ENCODE measurements at regions of chr6 and their contacts with region 1.

Region 1: DNA sequence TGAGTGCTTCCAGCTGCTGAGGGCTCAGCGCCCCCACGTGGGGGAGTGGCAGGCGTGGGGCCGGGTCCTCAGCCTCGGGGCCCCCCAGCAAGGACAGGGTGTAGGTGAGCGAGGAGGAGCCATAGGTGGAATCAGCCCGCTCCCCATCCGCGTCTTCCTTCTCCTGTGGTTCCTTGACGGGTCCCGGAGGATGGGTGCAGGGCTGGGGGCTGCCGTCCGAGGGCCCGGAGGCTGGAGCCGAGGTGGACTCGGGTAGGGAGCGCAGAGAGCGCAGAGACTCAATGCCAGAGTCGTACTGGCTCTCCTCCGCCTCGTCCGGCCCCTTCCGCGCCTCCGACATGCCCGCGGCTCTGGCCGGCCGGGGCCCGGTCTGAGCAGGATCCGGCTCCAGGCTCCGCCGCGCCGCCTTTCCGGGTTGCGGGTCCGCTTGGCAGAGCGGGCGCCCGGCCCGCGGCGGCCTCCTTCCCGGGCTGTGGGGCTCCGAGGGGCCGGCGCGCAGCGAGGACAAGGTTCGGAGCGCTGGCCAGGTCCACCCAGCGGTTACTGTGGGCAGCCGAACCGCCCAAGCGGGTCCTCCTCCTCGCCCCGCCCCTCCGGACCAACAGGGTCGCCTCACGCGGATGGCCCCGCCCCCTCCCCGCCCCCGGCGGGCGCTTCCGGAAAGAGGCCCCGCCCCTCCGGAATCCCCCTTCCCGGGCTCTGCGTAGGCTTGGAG is at the start of gene NFKBIE:
- DNase-seq: peak in 1 of 2 experiments; percentile 99
- H3K4me3 ChIP-seq: peak within 1 kb of the TSS; percentile 57 to 85 (median 76)
- H3K27ac ChIP-seq: no peak within 1 kb of the TSS
- H3K4me1 ChIP-seq: peaks cover 12 to 43% (median 21%) of the 10 kb centered on the region in 4 experiments
- H3K27me3 ChIP-seq: peaks cover 0 to 3% (median 0%) of the 10 kb centered on the region in 4 experiments; a peak in 2 of 7 replicates
- CTCF ChIP-seq: no peak; a peak in 1 of 4 replicates
- EP300 ChIP-seq: no peak
- POLR2A ChIP-seq: peak in 1 of 2 experiments; percentile 64; a peak in 2 of 3 replicates
- RAD21 ChIP-seq: peak in 1 of 2 experiments; percentile 34; a peak in 1 of 4 replicates
- total RNA-seq, gene NFKBIE: 10.8 and 13.5 TPM in 2 replicates

Region 2: DNA sequence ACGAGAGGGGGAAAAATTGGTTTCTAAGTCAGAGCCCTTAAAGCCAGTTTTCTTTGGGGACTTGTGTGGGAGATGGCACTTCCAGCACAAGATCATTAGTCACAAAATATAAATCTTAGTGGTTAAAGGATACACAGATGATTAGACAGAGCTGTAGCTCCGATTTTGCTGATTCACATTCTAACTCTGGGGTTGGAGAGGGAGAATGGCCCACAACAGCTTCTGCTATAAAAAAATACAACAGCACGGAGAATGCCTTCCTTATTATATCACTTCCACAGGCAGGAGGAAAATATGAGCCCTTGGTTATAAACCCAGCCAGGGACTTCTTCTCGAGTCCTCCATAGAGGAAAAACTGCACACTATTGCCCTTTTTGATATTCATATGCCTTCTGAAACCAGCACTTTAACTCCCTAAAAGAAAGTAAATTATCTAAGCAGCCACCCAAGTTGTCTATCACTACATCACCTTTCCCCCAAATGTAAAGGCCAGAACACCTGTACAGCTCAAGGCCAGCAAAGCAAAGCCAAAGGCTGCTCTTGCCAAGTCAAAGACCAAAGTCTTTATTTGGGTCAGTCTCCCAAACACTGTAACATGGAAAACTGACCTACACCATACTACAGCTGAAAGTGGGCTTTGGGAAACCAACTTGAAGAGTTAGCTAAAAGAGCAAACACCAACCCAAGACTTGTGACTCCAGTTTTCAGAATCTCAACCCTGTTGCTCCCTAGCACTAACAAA is 148.4 kb before region 1 on chr6:
- CTCF ChIA-PET with region 1: no interaction called
- POLR2A ChIA-PET with region 1: no interaction called
- DNase-seq: no peak
- H3K4me3 ChIP-seq: no peak overlapping the region
- H3K27ac ChIP-seq: peak overlapping the region; percentile 39; the same call in 1 of the 2 replicates
- H3K4me1 ChIP-seq: peaks cover 0 to 7% (median 2%) of the 10 kb centered on the region in 4 experiments; a peak in 3 of 7 replicates
- H3K27me3 ChIP-seq: no peaks in the 10 kb centered on the region
- CTCF ChIP-seq: no peak
- EP300 ChIP-seq: no peak
- POLR2A ChIP-seq: no peak
- RAD21 ChIP-seq: no peak

Region 3: DNA sequence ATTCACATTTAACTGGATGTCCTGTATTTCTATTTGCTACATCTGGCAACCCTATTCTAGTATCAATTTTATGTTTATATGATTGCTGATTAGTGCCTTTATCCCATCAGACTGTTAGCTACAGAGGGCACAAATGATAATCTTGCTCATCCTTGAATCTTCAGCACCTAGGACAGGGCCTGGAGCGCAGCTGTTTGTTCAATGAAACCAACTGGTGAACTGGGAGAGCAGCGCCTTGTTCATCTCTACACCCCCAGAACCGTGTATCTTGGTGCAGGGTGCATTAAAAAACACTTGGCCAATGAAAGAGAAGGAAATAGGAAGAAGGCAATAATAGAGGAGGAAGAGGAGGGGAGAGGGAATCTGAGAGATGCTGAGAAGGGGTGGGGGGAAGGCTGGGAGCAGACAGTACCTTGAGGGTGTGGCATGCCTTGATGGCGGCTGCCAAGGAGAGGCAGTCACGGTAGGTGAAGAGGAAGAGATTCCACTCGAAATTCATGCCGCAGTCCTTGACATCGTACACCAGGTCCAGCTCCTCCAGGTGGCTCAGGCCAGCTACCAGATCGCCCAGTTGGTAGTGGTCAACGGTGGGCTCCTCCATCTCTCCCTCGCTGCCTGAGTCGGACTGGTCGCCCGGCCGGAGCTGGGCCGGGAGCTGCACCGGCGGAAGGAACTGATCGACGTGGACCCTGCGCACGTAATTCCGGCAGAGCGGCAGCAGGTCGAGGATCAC is 20.6 kb after region 1 on chr6:
- CTCF ChIA-PET with region 1: interaction called, 34 read pairs
- POLR2A ChIA-PET with region 1: interaction called, 6 read pairs
- DNase-seq: peak in 1 of 2 experiments; percentile 65
- H3K4me3 ChIP-seq: no peak overlapping the region
- H3K27ac ChIP-seq: no peak overlapping the region
- H3K4me1 ChIP-seq: no peaks in the 10 kb centered on the region
- H3K27me3 ChIP-seq: peaks cover 0 to 4% (median 1%) of the 10 kb centered on the region in 4 experiments; a peak in 3 of 7 replicates
- CTCF ChIP-seq: no peak
- EP300 ChIP-seq: no peak
- POLR2A ChIP-seq: no peak
- RAD21 ChIP-seq: no peak

Region 4: DNA sequence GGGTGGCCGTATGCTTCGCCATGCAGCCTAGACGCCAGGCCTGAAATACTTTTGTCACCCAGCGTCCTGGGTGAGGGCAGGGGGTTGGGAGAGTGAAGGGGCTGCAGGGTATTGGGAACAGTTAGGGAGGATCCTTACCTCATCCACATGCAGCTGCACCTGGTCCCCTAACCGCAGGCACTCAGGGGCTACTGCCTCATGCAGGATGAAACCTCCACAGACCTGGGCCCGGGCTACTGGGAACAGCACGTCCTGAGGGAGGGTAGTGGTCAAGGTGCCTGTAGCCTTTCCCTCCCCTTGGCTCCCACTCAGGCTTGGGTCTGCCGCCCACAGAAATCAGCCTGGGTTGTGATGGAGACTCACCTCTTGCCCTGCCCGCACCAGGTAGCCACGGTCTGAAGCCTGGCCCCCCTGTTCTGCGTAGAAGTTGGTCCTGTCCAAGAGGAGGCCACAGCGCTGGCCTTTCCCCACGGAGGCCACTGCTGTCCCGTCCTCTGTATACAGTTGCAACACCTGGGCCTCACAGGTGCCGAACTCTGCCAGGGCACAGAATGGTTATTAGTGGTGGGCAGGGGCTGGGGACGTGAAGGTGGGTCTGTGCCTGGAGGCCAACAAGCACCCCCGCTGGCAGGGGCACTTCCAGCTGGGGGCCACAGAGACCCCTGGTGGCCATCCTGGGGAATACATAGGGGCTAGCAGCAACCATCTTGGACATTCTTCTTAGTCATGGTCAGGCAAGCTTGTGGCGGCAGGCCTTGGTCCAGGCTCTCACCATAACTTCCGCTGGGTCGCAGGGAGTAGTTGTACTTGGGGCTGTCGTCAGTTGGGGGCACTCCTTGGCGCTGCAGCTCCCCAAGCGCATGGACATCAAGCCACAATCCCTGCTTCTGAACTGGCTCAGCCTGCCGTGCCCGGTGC is 39.4 kb after region 1 on chr6:
- CTCF ChIA-PET with region 1: interaction called, 330 read pairs
- POLR2A ChIA-PET with region 1: interaction called, 102 read pairs
- DNase-seq: peak in 1 of 2 experiments; percentile 80
- H3K4me3 ChIP-seq: no peak overlapping the region
- H3K27ac ChIP-seq: no peak overlapping the region
- H3K4me1 ChIP-seq: peaks cover 0 to 4% (median 0%) of the 10 kb centered on the region in 4 experiments; a peak in 1 of 7 replicates
- H3K27me3 ChIP-seq: no peaks in the 10 kb centered on the region
- CTCF ChIP-seq: peak in 2 of 3 experiments; percentile 88 to 95; a peak in 3 of 4 replicates
- EP300 ChIP-seq: no peak
- POLR2A ChIP-seq: no peak
- RAD21 ChIP-seq: peak; percentile 72 to 77

Region 5: DNA sequence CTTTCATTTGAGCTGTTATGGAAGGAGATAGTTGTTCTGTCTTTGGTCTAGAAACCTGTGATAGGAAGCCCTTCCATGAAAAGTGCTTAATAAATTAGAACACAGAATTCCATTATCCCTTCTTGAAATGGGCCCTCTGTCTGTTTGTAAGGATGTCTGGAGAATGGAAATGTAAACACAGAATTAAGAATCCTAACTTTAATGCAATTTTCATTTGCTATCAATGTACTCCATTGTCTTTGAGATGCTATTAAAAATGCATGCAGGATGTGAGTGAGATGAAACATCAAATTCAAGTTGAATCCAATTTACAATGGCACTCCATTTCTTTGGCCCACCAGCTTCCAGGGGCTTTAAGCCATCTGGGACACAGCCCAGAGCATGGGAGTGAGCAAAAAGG is 61.9 kb after region 1 on chr6:
- CTCF ChIA-PET with region 1: interaction called, 15 read pairs
- POLR2A ChIA-PET with region 1: interaction called, 5 read pairs
- DNase-seq: no peak
- H3K4me3 ChIP-seq: no peak overlapping the region
- H3K27ac ChIP-seq: no peak overlapping the region
- H3K4me1 ChIP-seq: peaks cover 0 to 11% (median 6%) of the 10 kb centered on the region in 4 experiments; a peak in 4 of 7 replicates
- H3K27me3 ChIP-seq: no peaks in the 10 kb centered on the region; a peak in 1 of 7 replicates
- CTCF ChIP-seq: no peak
- EP300 ChIP-seq: no peak
- POLR2A ChIP-seq: no peak
- RAD21 ChIP-seq: no peak

Region 6: DNA sequence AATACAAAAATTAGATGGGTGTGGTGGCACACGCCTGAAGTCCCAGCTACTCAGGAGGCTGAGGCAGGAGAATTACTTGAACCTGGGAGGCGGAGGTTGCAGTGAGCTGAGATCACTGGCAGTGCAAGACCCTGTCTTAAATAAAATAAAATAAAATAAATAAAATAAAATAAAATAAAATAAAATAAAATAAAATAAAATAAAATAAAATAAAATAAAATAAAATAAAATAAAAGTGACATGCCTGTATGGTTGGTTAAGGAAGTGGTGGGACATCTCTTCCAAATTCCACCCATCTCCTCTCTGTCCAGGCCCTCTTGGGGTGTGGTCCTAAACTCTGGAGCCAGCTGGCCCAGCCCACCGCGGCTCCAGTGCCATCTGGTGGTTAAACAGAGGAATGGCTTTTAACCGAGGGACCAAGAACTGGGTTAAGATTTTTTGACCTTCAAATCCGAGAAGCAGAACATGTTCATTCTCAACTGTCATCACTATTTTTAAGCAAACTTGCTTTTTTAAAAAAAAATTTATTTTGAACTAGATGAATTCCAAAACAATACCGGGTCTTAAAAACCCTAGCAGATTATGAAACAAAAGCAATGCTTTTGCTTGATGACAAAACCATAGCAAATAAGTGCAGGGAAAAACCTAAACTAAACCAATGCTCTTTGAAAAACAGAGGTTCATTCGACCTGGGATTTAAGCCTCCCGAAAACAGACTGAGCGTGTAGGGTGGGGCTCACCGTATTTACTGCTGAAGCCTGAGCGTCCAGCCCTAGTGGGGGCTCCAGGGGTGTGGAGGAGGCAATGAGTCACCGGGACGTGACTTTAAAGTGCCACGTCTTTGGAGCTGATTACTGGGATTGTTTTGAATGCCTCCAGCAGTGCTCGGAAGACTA is 191.2 kb after region 1 on chr6:
- CTCF ChIA-PET with region 1: interaction called, 10 read pairs
- POLR2A ChIA-PET with region 1: no interaction called
- DNase-seq: no peak
- H3K4me3 ChIP-seq: no peak overlapping the region
- H3K27ac ChIP-seq: no peak overlapping the region
- H3K4me1 ChIP-seq: peaks cover 0 to 2% (median under 1%) of the 10 kb centered on the region in 4 experiments; a peak in 2 of 7 replicates
- H3K27me3 ChIP-seq: no peaks in the 10 kb centered on the region
- CTCF ChIP-seq: peak; percentile 72 to 86 (median 85)
- EP300 ChIP-seq: no peak
- POLR2A ChIP-seq: no peak
- RAD21 ChIP-seq: peak; percentile 70 to 79